ENCODE measurements at regions of chr17 and their contacts with region 1.

Region 1: GRCh38 chr17:33779225-33779591 is 475.9 kb upstream of the CCL2 start:
- DNase-seq: peak in 1 of 2 donors; percentile 20
- H3K4me3 ChIP-seq: no peak overlapping the region
- H3K27ac ChIP-seq: no peak overlapping the region
- H3K4me1 ChIP-seq: no peaks in the 10 kb centered on the region
- H3K27me3 ChIP-seq: peaks cover 0 to 8% of the 10 kb centered on the region in 2 donors
- CTCF ChIP-seq: peak; percentile 82 to 91 (median 88)
- POLR2A ChIP-seq: no peak

Region 2: GRCh38 chr17:33055171-33055611 is 724.0 kb before region 1 on chr17:
- intact Hi-C with region 1: loop called (anchors 5 kb)
- DNase-seq: no peak
- H3K4me3 ChIP-seq: no peak overlapping the region
- H3K27ac ChIP-seq: no peak overlapping the region
- H3K4me1 ChIP-seq: no peaks in the 10 kb centered on the region
- H3K27me3 ChIP-seq: no peaks in the 10 kb centered on the region
- CTCF ChIP-seq: no peak
- POLR2A ChIP-seq: no peak

Region 3: GRCh38 chr17:33550261-33550660 is 228.9 kb before region 1 on chr17:
- intact Hi-C with region 1: no loop called
- DNase-seq: no peak
- H3K4me3 ChIP-seq: no peak overlapping the region
- H3K27ac ChIP-seq: no peak overlapping the region
- H3K4me1 ChIP-seq: no peaks in the 10 kb centered on the region
- H3K27me3 ChIP-seq: peaks cover 0 to 10% of the 10 kb centered on the region in 2 donors
- CTCF ChIP-seq: no peak
- POLR2A ChIP-seq: no peak